Cardiac septum (tissue), 1 donor: ENCODE measurements at regions of chr5 and their contacts with region 1.

Region 1: DNA sequence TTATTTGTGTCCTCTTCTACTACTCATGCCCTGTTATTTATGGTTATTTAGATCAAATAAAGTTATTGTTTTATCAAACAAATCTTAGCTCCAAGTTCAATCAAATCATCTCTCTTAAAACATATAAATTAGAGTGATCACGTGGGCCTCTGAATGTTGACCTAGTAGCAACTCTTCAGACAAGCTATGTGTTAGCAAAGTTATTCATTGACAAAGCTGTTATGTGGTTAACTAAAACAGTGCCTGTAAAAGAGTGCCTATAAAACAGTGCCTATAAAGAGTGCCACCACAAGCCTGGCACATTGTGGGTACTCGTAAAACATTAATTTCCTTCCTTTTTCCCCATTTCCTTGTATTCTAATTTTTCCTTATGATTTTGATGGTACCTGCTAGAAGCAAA is 421.9 kb downstream of the HCN1 start:
- DNase-seq: no peak

Region 2: DNA sequence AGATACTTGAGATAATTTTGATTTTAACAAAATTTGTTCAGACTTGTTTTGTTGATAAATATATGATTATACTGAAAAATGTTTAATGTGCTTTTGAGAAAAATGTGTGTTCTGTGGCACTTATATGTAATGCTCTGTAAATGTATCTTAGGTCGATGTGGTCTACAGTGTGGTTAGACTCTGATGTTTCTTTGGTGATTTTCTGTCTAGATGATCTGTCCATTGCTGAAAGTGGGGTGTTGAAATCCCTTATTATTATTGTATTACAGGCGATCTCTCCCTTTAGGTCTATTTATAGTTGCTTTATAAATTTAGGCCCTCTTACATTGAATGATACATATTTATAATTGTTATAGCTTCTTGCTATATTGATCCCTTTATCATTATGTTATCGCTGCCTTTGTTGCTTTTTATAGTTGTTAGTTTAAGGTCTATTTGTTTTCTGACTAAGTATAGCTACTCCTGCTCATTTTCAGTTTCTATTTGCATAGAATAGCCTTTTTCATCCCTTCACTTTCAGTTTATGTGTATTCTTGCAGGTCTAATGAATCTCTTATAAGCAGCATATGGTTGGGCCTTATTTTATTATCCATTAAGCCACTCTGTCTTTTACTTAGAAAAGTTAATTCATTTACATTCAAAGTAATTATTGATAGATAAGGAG is 341.2 kb before region 1 on chr5:
- intact Hi-C with region 1: no loop called
- DNase-seq: no peak

Region 3: DNA sequence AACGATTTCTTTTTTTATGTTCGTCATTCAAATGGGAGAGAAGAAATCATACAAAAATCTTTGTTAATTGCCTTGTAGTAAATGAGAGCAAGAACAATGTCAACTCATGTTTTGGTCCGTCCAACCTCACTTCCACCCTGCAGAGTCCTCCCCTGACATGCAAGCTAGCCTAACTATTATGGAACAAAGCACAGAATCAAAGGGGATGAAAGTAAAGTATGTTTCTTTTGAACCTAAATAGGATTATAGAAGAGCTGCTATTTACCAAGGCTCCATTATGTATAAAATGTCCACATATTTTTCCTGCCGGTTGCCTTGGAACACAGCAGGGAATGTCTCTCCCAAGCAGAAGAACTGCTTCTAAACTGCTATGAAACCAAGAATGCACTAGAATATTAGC is 304.4 kb before region 1 on chr5:
- intact Hi-C with region 1: no loop called
- DNase-seq: no peak

Region 4: GRCh38 chr5:45334939-45335338 is 60.7 kb after region 1 on chr5:
- intact Hi-C with region 1: loop called (anchors 5 kb)
- DNase-seq: no peak

Region 5: DNA sequence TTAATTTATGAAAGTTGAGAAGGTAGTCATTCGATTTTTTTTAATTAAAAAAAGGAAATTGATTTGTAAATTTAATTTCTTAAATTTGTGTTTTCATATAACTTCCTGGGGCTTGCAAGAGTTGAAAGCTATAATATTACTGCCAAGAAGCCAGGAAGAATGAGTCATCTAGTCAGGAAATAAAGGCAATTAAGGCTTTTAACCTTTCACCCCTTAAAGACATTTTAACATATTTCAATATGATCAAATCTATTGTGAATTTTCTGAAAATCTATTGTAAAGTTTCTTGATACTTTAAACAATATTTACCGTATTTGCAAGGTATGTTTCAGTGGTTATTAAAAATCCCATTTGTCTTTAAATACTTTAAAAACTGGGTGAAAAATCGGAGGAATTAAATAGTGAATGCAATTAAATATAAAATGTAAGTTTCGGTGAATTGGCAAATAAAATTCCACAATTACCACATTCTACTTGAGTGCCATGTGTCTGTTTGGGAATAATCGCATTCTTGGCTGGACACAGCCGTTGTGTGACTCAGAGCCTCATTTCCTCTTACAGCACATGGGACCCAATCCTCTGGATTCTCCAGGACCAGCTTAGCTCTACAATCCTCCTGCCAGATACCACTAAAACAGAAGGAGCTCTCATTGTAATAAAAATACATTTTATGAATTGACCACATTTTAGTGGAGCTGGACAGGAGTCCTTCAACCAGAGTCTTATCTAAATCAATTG is 111.2 kb after region 1 on chr5:
- intact Hi-C with region 1: no loop called
- DNase-seq: no peak

Region 6: GRCh38 chr5:45893309-45893708 is 619.1 kb after region 1 on chr5:
- intact Hi-C with region 1: no loop called
- DNase-seq: no peak